Caco-2 (cell line): ENCODE measurements at regions of chr18 and their contacts with region 1.

Region 1: DNA sequence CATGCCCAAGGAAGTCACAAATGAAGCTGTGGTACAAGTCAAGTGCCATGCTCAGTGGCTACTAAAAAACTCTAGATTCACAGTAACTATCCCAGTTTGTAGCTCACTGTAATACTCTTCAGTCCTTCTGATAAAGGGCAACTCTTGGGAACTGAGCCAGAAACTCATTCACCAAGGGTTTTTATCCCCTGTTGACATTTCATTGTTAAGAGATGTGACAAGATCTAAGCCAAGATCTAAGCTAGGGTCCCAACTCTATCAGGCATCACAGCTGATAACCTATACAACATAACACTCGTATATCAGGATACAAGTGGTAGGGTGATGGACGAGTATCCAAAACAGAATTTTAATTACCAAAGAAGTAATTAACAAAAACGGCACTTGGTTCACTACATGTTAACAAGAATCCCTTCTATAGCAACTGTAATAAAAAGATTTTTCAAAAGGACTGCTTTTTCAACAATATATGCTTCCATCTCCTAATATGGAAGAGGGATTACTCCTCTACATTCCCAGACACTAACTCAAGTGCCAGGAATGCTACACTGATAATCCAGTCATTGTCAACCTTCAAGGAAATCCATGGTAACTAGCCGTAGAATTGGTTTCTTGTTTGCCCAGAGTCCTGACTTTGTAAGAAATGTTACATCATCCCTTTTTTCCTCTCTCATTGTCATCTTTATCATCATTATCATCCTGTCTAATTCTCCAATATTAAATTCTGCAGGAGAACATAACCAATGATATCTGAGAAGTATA is 111.7 kb downstream of the CDH2 start:
- DNase-seq: peak in 1 of 2 experiments; percentile 28
- H3K4me3 ChIP-seq: no peak overlapping the region
- H3K4me3 Mint-ChIP-seq: peak overlapping the region; percentile 33
- H3K27ac Mint-ChIP-seq: peak overlapping the region; percentile 85
- H3K4me1 ChIP-seq: peaks cover 11% of the 10 kb centered on the region
- H3K4me1 Mint-ChIP-seq: peaks cover 7% of the 10 kb centered on the region
- H3K27me3 ChIP-seq: no peaks in the 10 kb centered on the region
- H3K27me3 Mint-ChIP-seq: no peaks in the 10 kb centered on the region
- CTCF ChIP-seq: no peak

Region 2: GRCh38 chr18:27713738-27714095 is 351.5 kb before region 1 on chr18:
- CTCF ChIA-PET with region 1: no interaction called
- POLR2A ChIA-PET with region 1: no interaction called
- intact Hi-C with region 1: no loop called
- DNase-seq: no peak
- H3K4me3 ChIP-seq: no peak overlapping the region
- H3K4me3 Mint-ChIP-seq: no peak overlapping the region
- H3K27ac Mint-ChIP-seq: no peak overlapping the region
- H3K4me1 ChIP-seq: no peaks in the 10 kb centered on the region
- H3K4me1 Mint-ChIP-seq: no peaks in the 10 kb centered on the region
- H3K27me3 ChIP-seq: no peaks in the 10 kb centered on the region
- H3K27me3 Mint-ChIP-seq: no peaks in the 10 kb centered on the region
- CTCF ChIP-seq: no peak

Region 3: DNA sequence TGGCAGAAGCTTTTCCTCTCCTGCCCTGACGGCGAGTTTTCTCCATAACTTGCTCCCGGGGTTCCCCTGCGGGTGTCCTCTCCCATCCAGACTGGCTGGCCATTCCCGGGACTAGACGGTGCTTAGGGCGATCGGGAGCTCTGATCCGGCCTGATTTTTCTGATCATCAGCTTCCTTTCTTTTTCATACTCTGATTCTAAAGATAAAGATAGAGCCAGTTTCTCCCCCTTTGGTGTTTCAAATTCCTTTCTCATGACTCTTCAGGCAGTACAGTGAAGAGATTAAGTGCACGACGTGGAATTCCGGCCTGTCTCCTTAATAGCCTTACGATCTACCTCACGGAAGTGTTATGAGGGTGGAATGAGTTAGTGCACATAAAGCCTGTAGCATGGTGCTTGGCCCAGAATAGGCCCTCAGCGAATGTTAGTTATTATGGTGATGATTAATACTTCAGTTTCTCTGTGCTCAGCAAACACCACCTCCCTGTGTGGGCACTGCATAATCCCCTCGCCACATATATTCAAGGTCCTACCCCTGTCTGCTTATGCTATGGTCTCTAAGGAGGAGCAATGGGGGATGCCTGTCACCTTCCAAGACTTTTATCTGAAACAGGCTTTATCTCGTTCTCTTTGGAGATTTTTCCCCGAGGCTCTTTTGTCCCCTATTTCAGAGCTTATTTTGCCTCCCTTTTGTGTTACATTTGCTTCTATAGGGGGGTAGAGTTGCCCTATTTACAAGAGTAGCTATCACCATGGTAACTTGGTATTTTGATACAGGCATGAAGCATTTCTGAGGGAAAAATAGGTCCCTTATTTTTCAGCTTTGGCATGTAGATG is 143.1 kb before region 1 on chr18:
- CTCF ChIA-PET with region 1: no interaction called
- POLR2A ChIA-PET with region 1: no interaction called
- intact Hi-C with region 1: loop called (anchors 5 kb)
- DNase-seq: peak; percentile 15 to 42
- H3K4me3 ChIP-seq: peak overlapping the region; percentile 26
- H3K4me3 Mint-ChIP-seq: peak overlapping the region; percentile 87
- H3K27ac Mint-ChIP-seq: peak overlapping the region; percentile 95
- H3K4me1 ChIP-seq: no peaks in the 10 kb centered on the region
- H3K4me1 Mint-ChIP-seq: peaks cover 8% of the 10 kb centered on the region
- H3K27me3 ChIP-seq: no peaks in the 10 kb centered on the region
- H3K27me3 Mint-ChIP-seq: no peaks in the 10 kb centered on the region
- CTCF ChIP-seq: no peak